ENCODE measurements at regions of chr1 and their contacts with region 1.

Region 1: GRCh38 chr1:154183045-154183915 is 8.6 kb downstream of the TPM3 start:
- DNase-seq: peak; percentile 95
- ATAC-seq: peak; percentile 62
- H3K4me3 Mint-ChIP-seq: peak overlapping the region; percentile 99
- H3K27ac Mint-ChIP-seq: peak overlapping the region; percentile 100
- H3K4me1 Mint-ChIP-seq: peaks cover 39% of the 10 kb centered on the region
- H3K27me3 Mint-ChIP-seq: no peaks in the 10 kb centered on the region

Region 2: DNA sequence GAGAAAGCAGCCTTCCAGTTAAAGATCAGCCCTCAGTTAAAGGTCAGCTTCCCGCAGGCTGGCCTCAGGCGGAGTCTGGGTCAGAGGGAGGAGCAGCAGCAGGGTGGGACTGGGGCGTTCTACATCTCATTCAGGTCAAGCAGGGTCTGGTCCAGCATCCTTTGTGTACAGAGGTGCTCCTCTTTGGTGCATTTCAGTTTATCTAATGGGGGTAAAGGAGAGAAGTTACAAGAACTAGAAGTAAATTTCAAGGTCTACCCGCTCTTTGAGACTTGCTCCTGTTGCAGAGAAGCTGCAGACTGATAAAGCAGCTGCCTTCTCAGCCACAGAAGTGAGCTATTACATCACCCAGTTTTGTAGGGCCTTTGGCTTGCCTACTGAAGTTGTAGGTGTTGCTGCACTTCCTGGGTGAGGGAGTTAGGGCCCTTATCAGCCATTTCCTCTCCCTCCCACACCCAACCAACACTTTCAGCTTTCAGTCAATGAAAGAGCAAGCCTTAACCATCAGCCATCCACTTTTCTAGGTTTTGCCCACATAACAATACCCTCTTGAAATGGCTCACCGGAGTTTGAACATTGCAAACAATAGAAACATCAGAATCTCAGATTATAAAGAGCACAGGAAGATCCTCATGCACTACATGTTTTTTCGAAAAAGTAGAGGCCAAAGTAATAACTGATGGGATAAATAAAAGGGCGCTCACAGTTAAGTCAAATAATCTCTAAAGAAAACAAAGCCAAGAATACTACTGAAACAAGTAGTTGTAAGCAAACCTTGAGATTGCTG is 25.6 kb before region 1 on chr1:
- POLR2A ChIA-PET with region 1: interaction called, 70 read pairs
- DNase-seq: peak; percentile 48
- ATAC-seq: peak; percentile 98
- H3K4me3 Mint-ChIP-seq: peak overlapping the region; percentile 77
- H3K27ac Mint-ChIP-seq: peak overlapping the region; percentile 93
- H3K4me1 Mint-ChIP-seq: peaks cover 51% of the 10 kb centered on the region
- H3K27me3 Mint-ChIP-seq: no peaks in the 10 kb centered on the region

Region 3: GRCh38 chr1:154220071-154220969 is 37.0 kb after region 1 on chr1 and contains the start of gene UBAP2L:
- POLR2A ChIA-PET with region 1: interaction called, 21 read pairs
- DNase-seq: peak; percentile 98
- ATAC-seq: peak; percentile 88
- H3K4me3 Mint-ChIP-seq: peak within 1 kb of the TSS; percentile 88
- H3K27ac Mint-ChIP-seq: peak within 1 kb of the TSS; percentile 95
- H3K4me1 Mint-ChIP-seq: peaks cover 57% of the 10 kb centered on the region
- H3K27me3 Mint-ChIP-seq: no peaks in the 10 kb centered on the region
- total RNA-seq, gene UBAP2L: 192 to 195 TPM